Ovary (tissue), 10 donors: ENCODE measurements at regions of chr7 and their contacts with region 1.

Region 1: GRCh38 chr7:143416565-143417149 is 8.0 kb upstream of the EPHA1 start:
- DNase-seq: no peak
- H3K4me3 ChIP-seq: no peak overlapping the region
- H3K27ac ChIP-seq: no peak overlapping the region
- H3K4me1 ChIP-seq: no peaks in the 10 kb centered on the region
- H3K27me3 ChIP-seq: no peaks in the 10 kb centered on the region
- CTCF ChIP-seq: peak; percentile 70 to 72 (median 72)
- EP300 ChIP-seq: no peak
- POLR2A ChIP-seq: no peak

Region 2: DNA sequence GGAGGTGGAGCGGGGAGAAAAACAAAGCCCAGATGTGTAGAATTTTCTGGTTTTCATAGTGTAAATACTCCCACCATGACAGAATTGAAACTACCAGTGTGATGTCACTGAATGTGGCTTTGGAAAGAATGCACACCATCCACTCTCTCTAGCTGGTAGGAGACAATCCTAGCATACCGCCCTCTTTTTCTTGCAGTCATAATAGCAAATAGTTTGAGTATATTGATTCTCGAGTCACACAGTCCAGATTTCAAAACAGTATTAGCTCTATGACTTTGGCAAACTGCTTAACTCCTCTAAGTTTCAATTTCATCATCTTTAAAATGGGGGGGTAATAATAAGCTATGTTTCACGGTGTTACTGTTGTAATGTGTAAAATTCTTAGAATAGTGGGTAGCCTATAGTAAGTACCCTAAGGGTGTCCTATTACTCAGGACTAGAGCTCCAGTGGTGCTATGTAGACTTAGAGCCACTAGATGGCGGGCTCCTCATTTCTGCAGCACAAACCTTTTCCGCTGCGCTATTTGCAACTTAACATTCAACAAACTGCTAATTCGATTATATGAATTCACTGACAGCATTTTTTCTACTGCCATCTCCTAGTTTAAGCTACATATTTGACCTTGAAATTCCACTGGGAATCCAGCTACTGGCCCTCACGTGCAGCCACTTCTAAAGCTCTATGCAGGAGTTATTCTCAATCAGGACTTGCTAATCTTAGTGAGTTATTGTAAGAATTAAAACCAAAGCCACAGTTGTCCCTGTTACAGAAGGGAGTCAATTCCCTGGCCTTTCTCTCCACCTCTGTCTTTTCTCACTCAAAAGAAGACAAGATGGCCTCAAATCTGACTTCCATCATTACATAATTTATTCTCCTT is 176.1 kb before region 1 on chr7:
- intact Hi-C with region 1: loop called (anchors 5 kb)
- DNase-seq: peak; percentile 37 to 73 (median 61)
- H3K4me3 ChIP-seq: no peak overlapping the region
- H3K27ac ChIP-seq: no peak overlapping the region
- H3K4me1 ChIP-seq: peaks cover 1% of the 10 kb centered on the region
- H3K27me3 ChIP-seq: no peaks in the 10 kb centered on the region
- CTCF ChIP-seq: peak; percentile 61 to 76 (median 73)
- EP300 ChIP-seq: no peak
- POLR2A ChIP-seq: no peak

Region 3: GRCh38 chr7:143263266-143264195 is 153.1 kb before region 1 on chr7 and contains the start of gene GSTK1:
- intact Hi-C with region 1: loop called in 1 of 4 experiments (anchors 10 kb)
- DNase-seq: peak; percentile 75 to 86 (median 81)
- H3K4me3 ChIP-seq: peak within 1 kb of the TSS; percentile 78
- H3K27ac ChIP-seq: peak within 1 kb of the TSS; percentile 50 to 78
- H3K4me1 ChIP-seq: peaks cover 4% of the 10 kb centered on the region
- H3K27me3 ChIP-seq: no peaks in the 10 kb centered on the region
- CTCF ChIP-seq: no peak
- EP300 ChIP-seq: no peak
- POLR2A ChIP-seq: no peak
- total RNA-seq, gene GSTK1: 55.0 to 108 (median 75.7) TPM

Region 4: GRCh38 chr7:143375298-143376034 is 41.2 kb before region 1 on chr7:
- intact Hi-C with region 1: loop called in 1 of 4 experiments (anchors 5 kb)
- DNase-seq: no peak
- H3K4me3 ChIP-seq: no peak overlapping the region
- H3K27ac ChIP-seq: no peak overlapping the region
- H3K4me1 ChIP-seq: no peaks in the 10 kb centered on the region
- H3K27me3 ChIP-seq: no peaks in the 10 kb centered on the region
- CTCF ChIP-seq: no peak
- EP300 ChIP-seq: no peak
- POLR2A ChIP-seq: no peak